Activated CD4-positive, alpha-beta memory T cell treated with anti-CD3 and anti-CD28 coated beads for 36 hours (primary cell): ENCODE measurements at regions of chr22 and their contacts with region 1.

Region 1: DNA sequence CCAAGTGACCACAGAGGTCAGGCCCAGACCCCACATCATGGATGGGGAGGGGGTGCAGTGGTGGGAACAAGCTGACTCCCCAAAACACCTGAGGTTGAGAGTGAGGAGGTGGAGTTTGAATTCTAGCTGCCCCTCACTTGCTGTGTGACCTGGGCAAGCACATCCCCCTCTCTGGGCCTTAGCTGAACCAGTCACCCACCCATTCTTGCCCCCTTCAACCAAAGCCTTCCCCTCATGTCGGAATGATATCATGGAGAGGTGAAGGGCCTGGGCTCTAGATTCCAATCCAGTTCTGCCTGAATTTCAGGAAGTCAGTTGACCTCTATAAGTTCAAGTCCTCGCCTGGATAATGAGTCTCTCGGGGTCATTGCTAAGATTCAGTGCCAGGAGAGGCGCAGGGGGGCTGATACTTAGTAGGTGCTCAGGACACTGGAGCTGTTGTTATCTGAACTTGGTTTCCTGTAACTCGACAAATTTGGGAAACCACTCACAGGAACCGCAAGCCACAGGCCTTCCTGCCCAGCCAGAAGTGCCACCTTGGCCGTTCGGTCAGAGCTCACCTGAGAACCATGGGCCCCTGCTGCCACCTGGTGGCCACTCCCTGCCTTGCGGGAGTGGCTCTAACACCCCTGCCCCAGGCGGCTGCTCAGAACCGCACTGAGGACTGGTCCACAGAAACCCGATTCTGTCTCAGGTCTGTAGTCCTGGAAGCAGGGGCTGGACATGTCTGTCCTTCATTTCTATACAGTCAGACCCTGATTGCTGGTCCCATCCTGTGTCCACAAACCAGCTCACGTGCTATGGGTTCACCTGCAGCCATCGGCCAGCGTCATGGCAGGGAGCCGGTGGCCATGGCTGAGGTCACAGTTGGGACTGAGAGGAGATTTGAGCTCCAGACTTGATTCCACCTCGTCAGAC is 6.9 kb downstream of the CDC42EP1 start:
- DNase-seq: peak; percentile 96
- H3K4me3 Mint-ChIP-seq: peak overlapping the region; percentile 35
- H3K27ac Mint-ChIP-seq: peak overlapping the region; percentile 81
- H3K4me1 Mint-ChIP-seq: peaks cover 27% of the 10 kb centered on the region
- H3K27me3 Mint-ChIP-seq: peaks cover 24% of the 10 kb centered on the region

Region 2: GRCh38 chr22:37316875-37317371 is 250.2 kb before region 1 on chr22:
- CTCF ChIA-PET with region 1: interaction called, 11 read pairs
- POLR2A ChIA-PET with region 1: no interaction called
- intact Hi-C with region 1: no loop called
- DNase-seq: peak; percentile 83
- H3K4me3 Mint-ChIP-seq: no peak overlapping the region
- H3K27ac Mint-ChIP-seq: no peak overlapping the region
- H3K4me1 Mint-ChIP-seq: peaks cover 29% of the 10 kb centered on the region
- H3K27me3 Mint-ChIP-seq: no peaks in the 10 kb centered on the region

Region 3: DNA sequence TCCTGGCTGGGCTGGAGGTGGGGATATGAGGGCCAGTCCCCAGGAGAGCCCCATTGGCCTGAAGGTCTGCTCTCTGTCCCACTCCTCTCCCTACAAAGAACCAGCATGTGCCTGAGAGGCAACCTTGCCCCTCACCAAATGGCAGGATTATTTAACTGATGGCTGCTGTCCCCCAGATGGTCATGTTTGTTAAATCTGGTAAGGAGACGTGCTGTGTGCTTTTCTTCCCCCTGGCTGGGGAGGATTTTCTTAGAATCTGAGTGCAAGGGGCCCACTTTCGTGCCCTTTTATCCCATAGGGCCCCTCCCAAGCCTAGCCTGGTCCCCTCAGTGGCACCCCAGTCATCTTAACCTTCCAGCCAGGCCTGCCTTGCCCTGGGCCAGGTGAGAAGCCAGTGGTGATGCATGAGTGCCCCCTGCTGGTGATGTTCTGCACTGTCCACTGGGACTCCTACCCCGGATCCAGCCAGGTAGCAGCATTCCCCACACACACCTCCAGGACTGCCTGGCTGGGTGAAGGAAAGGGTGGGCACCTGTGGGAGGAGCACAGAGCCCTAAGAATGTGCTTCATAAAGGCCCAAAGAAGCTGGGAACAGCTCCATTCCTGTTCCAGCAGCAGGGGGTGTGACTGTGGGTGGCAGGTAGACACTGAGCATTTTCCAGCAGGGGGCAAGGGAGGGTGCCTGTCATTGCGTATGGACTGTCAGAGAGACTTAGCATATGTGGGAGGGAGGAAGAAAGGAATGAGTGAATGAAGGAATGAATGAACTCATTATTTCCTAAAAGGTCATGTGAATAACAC is 109.9 kb before region 1 on chr22:
- CTCF ChIA-PET with region 1: interaction called, 11 read pairs
- POLR2A ChIA-PET with region 1: no interaction called
- intact Hi-C with region 1: no loop called
- DNase-seq: peak; percentile 89
- H3K4me3 Mint-ChIP-seq: no peak overlapping the region
- H3K27ac Mint-ChIP-seq: no peak overlapping the region
- H3K4me1 Mint-ChIP-seq: no peaks in the 10 kb centered on the region
- H3K27me3 Mint-ChIP-seq: no peaks in the 10 kb centered on the region

Region 4: DNA sequence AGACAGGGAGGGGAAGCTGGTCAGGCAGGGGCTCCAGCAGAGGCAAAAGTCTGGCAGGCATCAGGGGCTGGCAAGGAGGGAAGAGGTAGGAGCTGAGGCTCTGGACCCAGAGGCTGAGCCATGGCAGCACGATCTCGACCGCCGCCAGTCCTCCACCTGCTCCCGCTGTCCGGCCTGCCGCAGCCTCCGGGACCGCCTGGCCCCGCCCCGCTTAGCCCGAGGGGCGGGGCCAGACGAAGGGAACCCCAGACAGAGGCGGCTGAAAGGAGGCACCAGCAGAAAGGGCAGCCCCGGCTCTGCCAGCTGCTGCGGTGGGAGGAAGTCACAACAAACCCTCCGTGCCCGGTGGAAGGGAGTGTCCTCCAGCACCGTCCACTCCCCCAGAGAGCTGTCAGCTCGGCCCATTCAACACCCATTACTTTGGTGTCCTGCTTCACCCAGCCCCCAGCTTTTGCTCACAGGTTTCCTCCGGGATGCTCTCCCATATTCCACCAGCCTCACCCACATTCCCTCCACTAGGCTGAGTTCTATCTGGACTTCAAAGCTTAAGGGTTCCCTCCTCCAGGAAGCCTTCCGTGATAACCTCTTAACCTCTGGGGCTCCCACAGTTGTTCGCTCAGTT is 80.8 kb before region 1 on chr22 and contains the start of gene MFNG:
- CTCF ChIA-PET with region 1: interaction called, 24 read pairs
- POLR2A ChIA-PET with region 1: interaction called, 13 read pairs
- intact Hi-C with region 1: loop called (anchors 2 kb)
- DNase-seq: peak; percentile 87
- H3K4me3 Mint-ChIP-seq: peak within 1 kb of the TSS; percentile 89
- H3K27ac Mint-ChIP-seq: peak within 1 kb of the TSS; percentile 92
- H3K4me1 Mint-ChIP-seq: peaks cover 60% of the 10 kb centered on the region
- H3K27me3 Mint-ChIP-seq: no peaks in the 10 kb centered on the region
- total RNA-seq, gene MFNG: 101 to 106 TPM

Region 5: GRCh38 chr22:37538590-37539357 is 28.4 kb before region 1 on chr22:
- CTCF ChIA-PET with region 1: interaction called, 612 read pairs
- POLR2A ChIA-PET with region 1: interaction called, 18 read pairs
- intact Hi-C with region 1: loop called (anchors 1 kb)
- DNase-seq: peak; percentile 96
- H3K4me3 Mint-ChIP-seq: peak overlapping the region; percentile 34
- H3K27ac Mint-ChIP-seq: peak overlapping the region; percentile 57
- H3K4me1 Mint-ChIP-seq: peaks cover 42% of the 10 kb centered on the region
- H3K27me3 Mint-ChIP-seq: peaks cover 22% of the 10 kb centered on the region

Region 6: GRCh38 chr22:37581504-37581903 is 14.3 kb after region 1 on chr22:
- CTCF ChIA-PET with region 1: interaction called, 10 read pairs
- POLR2A ChIA-PET with region 1: no interaction called
- intact Hi-C with region 1: no loop called
- DNase-seq: no peak
- H3K4me3 Mint-ChIP-seq: no peak overlapping the region
- H3K27ac Mint-ChIP-seq: no peak overlapping the region
- H3K4me1 Mint-ChIP-seq: peaks cover 9% of the 10 kb centered on the region
- H3K27me3 Mint-ChIP-seq: peaks cover 3% of the 10 kb centered on the region

Region 7: GRCh38 chr22:37623075-37624016 is 56.2 kb after region 1 on chr22:
- CTCF ChIA-PET with region 1: no interaction called
- POLR2A ChIA-PET with region 1: no interaction called
- intact Hi-C with region 1: no loop called
- DNase-seq: peak; percentile 87
- H3K4me3 Mint-ChIP-seq: no peak overlapping the region
- H3K27ac Mint-ChIP-seq: peak overlapping the region; percentile 87
- H3K4me1 Mint-ChIP-seq: peaks cover 43% of the 10 kb centered on the region
- H3K27me3 Mint-ChIP-seq: no peaks in the 10 kb centered on the region

Region 8: DNA sequence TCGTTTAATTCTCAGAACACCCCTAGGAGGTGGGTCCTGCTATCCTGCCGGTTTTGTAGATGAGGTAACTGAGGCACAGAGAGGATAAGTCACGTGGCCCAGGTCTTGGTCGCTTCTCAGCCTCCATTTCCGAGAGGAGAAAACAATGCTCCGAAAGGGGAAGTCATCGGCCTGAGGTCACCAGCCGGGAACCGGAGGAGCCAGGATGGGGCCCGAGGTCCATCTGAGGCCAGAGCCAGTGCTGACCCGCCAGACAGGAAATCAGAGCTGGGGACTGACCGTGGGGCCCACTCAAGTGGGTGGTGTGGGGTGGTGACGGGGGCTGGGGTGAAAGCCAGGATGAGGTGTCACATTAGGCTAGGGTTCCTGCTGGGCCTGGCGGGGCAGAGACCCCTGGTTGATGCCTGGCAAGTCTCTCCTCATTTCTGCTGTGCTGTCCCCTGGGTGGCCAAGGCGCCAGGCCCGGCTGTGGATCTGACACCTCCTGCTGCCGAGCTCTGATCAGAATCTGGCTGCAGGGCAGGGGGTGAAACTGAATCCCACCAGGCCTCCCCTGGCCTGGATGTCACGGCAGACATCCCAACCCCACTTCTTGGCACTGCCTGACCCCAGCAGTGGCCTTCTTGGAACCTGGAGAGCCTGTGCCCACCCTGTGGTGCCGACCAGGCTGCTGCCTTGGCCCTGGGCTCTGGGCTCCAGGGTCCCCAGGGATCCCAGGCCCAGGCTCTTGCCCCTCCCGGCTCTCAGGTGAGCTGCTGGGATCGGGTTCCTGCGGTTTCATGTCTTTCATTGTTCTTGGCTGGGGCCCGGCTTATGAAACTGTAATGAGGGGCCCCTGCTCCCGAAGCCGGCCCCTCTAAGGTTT is 141.7 kb after region 1 on chr22:
- CTCF ChIA-PET with region 1: no interaction called
- POLR2A ChIA-PET with region 1: no interaction called
- intact Hi-C with region 1: no loop called
- DNase-seq: no peak
- H3K4me3 Mint-ChIP-seq: no peak overlapping the region
- H3K27ac Mint-ChIP-seq: no peak overlapping the region
- H3K4me1 Mint-ChIP-seq: no peaks in the 10 kb centered on the region
- H3K27me3 Mint-ChIP-seq: no peaks in the 10 kb centered on the region

Region 9: GRCh38 chr22:37734964-37735451 is 167.8 kb after region 1 on chr22:
- CTCF ChIA-PET with region 1: no interaction called
- POLR2A ChIA-PET with region 1: no interaction called
- intact Hi-C with region 1: no loop called
- DNase-seq: no peak
- H3K4me3 Mint-ChIP-seq: no peak overlapping the region
- H3K27ac Mint-ChIP-seq: no peak overlapping the region
- H3K4me1 Mint-ChIP-seq: no peaks in the 10 kb centered on the region
- H3K27me3 Mint-ChIP-seq: no peaks in the 10 kb centered on the region

Region 10: DNA sequence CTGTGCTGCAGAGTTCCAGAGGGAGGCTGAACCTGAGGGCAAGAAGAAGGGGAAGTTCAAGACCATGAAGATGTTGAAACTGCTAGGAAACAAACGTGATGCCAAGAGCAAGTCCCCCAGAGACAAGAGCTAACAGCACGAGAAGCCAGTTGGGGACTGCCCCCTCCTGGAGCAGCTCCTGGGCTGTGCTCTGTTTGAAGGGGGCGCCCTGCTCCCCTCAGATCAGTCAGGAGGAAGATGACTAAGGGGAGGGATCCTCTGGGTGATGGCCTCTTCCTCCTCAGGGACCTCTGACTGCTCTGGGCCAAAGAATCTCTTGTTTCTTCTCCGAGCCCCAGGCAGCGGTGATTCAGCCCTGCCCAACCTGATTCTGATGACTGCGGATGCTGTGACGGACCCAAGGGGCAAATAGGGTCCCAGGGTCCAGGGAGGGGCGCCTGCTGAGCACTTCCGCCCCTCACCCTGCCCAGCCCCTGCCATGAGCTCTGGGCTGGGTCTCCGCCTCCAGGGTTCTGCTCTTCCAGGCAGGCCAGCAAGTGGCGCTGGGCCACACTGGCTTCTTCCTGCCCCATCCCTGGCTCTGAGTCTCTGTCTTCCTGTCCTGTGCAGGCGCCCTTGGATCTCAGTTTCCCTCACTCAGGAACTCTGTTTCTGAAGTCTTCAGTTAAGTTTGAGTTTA is 373.7 kb after region 1 on chr22:
- CTCF ChIA-PET with region 1: no interaction called
- POLR2A ChIA-PET with region 1: no interaction called
- intact Hi-C with region 1: no loop called
- DNase-seq: no peak
- H3K4me3 Mint-ChIP-seq: no peak overlapping the region
- H3K27ac Mint-ChIP-seq: no peak overlapping the region
- H3K4me1 Mint-ChIP-seq: no peaks in the 10 kb centered on the region
- H3K27me3 Mint-ChIP-seq: no peaks in the 10 kb centered on the region